GM10248 (cell line): ENCODE measurements at regions of chr9 and their contacts with region 1.

Region 1: DNA sequence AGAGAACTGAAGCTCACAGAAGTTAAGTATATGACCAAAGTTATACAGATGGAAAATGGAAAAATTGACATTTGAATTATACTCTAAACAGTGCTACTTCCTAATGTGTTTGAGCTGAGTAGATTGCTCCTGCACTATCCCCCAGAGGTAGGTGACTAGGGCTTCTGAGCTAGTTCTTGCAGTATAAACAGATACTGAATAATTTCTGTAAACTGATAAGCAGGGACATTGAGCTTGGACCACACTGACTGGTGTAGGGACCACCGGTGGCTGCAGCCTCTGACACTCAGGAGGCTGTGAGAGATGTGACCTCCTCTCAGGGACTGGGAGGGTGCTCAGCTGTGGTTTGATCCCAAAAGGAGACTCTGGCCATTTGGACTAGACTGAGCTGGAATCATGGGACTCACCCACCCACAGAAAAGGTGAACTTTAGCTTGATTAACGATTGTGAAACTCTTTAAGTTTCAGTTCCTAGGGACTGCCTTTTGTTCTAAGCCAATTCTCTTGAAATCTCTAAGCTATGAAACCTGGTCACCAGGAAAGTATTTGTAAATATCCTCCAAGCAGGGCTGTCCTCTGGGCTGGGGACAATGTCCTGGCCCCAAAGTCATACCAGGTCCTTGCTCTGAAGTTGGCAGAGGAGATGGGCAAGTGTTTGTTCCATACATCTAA is 291.5 kb downstream of the SEC61B start:
- DNase-seq: peak; percentile 59
- CTCF ChIP-seq: no peak

Region 2: DNA sequence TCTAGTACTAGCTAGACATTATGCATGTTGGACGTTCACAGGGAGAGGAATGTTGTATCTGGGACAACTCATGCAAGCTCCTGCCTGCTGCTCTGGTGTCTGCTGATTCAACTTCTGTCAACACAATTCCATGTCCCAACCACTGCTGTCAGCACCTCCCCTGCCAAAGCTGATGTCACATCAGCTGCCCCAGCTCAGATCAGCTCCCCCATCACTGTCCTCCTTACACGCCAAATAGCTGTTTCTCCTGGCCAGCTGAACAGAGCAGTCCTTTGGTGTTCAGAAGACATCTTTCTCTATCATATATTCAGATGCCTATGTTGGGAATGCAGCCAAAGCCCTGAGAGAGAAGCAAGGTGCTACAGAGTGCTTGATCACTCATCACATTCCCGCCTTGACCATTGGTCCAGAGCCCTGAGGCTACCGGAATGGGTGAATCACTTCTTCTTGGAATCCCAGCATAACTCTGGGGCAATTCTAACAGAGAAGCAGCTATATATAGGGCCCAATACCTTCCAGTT is 68.1 kb before region 1 on chr9:
- CTCF ChIA-PET with region 1: no interaction called
- POLR2A ChIA-PET with region 1: no interaction called
- DNase-seq: no peak
- CTCF ChIP-seq: no peak

Region 3: GRCh38 chr9:99463131-99463530 is 50.4 kb before region 1 on chr9:
- CTCF ChIA-PET with region 1: no interaction called
- POLR2A ChIA-PET with region 1: no interaction called
- DNase-seq: no peak
- CTCF ChIP-seq: no peak

Region 4: GRCh38 chr9:99523838-99524237 is 10.3 kb after region 1 on chr9:
- CTCF ChIA-PET with region 1: interaction called, 14 read pairs
- POLR2A ChIA-PET with region 1: no interaction called
- DNase-seq: no peak
- CTCF ChIP-seq: no peak